ENCODE measurements at regions of chr3 and their contacts with region 1.

Region 1: GRCh38 chr3:127455541-127456450 is 134.7 kb downstream of the TPRA1 start:
- DNase-seq: peak; percentile 93
- ATAC-seq: peak; percentile 85
- H3K4me3 Mint-ChIP-seq: peak overlapping the region; percentile 78
- H3K27ac Mint-ChIP-seq: no peak overlapping the region
- H3K4me1 Mint-ChIP-seq: peaks cover 21% of the 10 kb centered on the region
- H3K27me3 Mint-ChIP-seq: peaks cover 56% of the 10 kb centered on the region
- CTCF ChIP-seq: peak; percentile 93

Region 2: DNA sequence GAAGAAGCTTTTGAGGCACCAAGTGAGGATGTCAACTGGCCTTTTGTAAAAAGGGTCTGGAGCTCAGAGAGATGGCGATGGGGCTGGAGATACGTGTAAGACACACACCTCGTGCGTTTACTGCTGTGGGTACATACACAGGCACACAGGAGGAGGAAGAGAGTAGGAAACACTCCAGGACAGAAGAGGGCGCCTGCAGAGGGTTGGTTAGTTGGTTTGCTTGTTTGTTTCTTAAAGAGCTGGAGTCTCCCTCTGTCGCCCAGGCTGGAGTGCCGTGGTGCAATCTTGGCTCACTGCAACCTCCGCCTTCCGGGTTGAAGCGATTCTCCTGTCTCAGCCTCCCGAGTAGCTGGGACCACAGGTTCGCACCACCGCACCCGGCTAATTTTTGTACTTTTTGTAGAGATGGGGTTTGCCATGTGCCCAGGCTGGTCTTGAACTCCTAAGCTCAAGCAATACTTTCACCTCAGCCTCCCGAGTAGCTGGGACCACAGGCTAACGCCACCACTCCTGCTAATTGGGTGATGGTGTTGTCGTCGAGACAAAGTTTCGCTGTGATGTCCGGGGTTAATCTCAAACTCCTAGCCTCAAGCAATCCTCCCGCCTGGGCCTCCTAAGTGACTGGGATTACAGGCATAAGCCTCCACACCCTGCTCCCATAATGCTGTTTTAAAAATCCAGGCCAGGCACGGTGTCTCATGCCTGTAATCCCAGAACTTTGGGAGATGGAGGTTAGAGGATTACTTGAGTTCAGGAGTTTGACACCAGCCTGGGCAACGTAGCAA is 166.7 kb before region 1 on chr3:
- CTCF ChIA-PET with region 1: interaction called, 20 read pairs
- POLR2A ChIA-PET with region 1: no interaction called
- DNase-seq: peak; percentile 39
- ATAC-seq: peak; percentile 80
- H3K4me3 Mint-ChIP-seq: no peak overlapping the region
- H3K27ac Mint-ChIP-seq: no peak overlapping the region
- H3K4me1 Mint-ChIP-seq: no peaks in the 10 kb centered on the region
- H3K27me3 Mint-ChIP-seq: no peaks in the 10 kb centered on the region; the same call in 1 of the 2 replicates
- CTCF ChIP-seq: no peak

Region 3: DNA sequence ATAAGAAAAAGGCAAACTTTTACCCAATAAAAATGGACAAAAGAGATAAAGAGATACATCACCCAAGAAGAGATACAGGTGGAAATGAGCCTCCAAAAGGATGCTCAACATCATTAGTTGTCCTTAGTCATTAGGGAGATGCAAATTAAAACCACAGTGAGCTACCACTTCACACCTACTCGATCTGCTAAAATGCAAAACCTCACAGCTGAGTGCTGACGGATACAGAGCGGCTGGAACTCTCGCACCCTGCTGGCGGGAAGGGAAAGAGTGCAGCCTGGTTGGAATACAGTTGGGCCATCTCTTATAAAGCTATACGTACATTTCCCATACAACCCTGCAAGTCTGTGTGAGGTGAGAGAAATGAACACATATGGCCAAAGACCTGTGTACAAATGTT is 89.4 kb before region 1 on chr3:
- CTCF ChIA-PET with region 1: interaction called, 10 read pairs
- POLR2A ChIA-PET with region 1: no interaction called
- DNase-seq: peak; percentile 33
- ATAC-seq: peak; percentile 51
- H3K4me3 Mint-ChIP-seq: no peak overlapping the region
- H3K27ac Mint-ChIP-seq: no peak overlapping the region
- H3K4me1 Mint-ChIP-seq: peaks cover 14% of the 10 kb centered on the region
- H3K27me3 Mint-ChIP-seq: no peaks in the 10 kb centered on the region; the same call in 1 of the 2 replicates
- CTCF ChIP-seq: no peak

Region 4: GRCh38 chr3:127420825-127421224 is 35.0 kb before region 1 on chr3:
- CTCF ChIA-PET with region 1: interaction called, 14 read pairs
- POLR2A ChIA-PET with region 1: no interaction called
- DNase-seq: no peak
- ATAC-seq: peak; percentile 50
- H3K4me3 Mint-ChIP-seq: no peak overlapping the region
- H3K27ac Mint-ChIP-seq: no peak overlapping the region
- H3K4me1 Mint-ChIP-seq: peaks cover 42% of the 10 kb centered on the region
- H3K27me3 Mint-ChIP-seq: peaks cover 8% of the 10 kb centered on the region
- CTCF ChIP-seq: no peak

Region 5: DNA sequence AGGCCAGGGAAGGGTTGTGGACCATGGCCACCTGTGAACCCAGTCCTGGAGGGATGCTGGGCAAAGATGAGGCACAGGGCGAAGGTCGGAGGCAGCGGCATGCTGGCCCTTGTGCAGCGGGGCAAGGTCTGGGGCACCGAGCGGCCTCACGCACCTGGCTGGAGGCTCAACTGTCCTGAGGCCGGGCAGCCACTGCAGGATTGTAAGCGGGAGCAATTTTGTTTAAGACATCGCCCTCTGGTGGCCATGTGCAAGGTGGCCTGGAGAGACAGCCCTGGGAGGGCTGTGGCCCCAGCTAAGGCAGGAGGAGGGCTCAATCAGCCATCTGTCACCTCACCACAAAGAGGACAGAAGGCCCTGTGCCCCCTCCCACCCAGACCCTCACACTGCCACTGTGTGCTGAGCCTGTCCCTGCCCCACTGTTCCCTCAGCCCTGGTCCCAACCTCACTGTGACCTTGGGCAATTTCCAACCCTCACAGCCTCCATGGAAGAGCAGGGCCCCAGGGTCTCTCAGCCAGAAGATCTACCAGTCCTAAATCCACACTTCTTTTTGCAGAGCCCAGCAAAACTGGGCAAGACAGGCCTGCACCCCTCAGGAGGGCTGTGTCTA is 88.5 kb after region 1 on chr3:
- CTCF ChIA-PET with region 1: interaction called, 106 read pairs
- POLR2A ChIA-PET with region 1: interaction called, 3 read pairs
- DNase-seq: peak; percentile 87
- ATAC-seq: peak; percentile 59
- H3K4me3 Mint-ChIP-seq: no peak overlapping the region
- H3K27ac Mint-ChIP-seq: no peak overlapping the region
- H3K4me1 Mint-ChIP-seq: peaks cover 16% of the 10 kb centered on the region
- H3K27me3 Mint-ChIP-seq: peaks cover 8% of the 10 kb centered on the region; the same call in 1 of the 2 replicates
- CTCF ChIP-seq: peak; percentile 83

Measured in WTC11 (cell line).